ENCODE measurements at regions of chr22 and their contacts with region 1.

Region 1: GRCh38 chr22:38317122-38317994 is at the start of gene CSNK1E:
- DNase-seq: peak; percentile 85 to 90
- ATAC-seq: peak; percentile 68 to 79 (median 74)
- H3K4me3 ChIP-seq: peak within 1 kb of the TSS; percentile 76
- H3K27ac ChIP-seq: peak within 1 kb of the TSS; percentile 96
- H3K4me1 ChIP-seq: peaks cover 31% of the 10 kb centered on the region
- H3K27me3 ChIP-seq: no peaks in the 10 kb centered on the region
- CTCF ChIP-seq: no peak
- total RNA-seq, gene CSNK1E: 41.4 to 61.8 (median 49.0) TPM

Region 2: GRCh38 chr22:36365020-36365411 is 1952.3 kb before region 1 on chr22:
- intact Hi-C with region 1: no loop called
- DNase-seq: peak; percentile 62 to 67
- ATAC-seq: peak; percentile 48 to 69 (median 61)
- H3K4me3 ChIP-seq: no peak overlapping the region
- H3K27ac ChIP-seq: peak overlapping the region; percentile 69
- H3K4me1 ChIP-seq: peaks cover 92% of the 10 kb centered on the region
- H3K27me3 ChIP-seq: no peaks in the 10 kb centered on the region
- CTCF ChIP-seq: no peak

Region 3: GRCh38 chr22:38272373-38273134 is 44.8 kb before region 1 on chr22 and contains the start of gene TMEM184B:
- intact Hi-C with region 1: loop called in 1 of 2 experiments (anchors 5 kb)
- DNase-seq: peak; percentile 86 to 90
- ATAC-seq: peak; percentile 91 to 95 (median 93)
- H3K4me3 ChIP-seq: peak within 1 kb of the TSS; percentile 90
- H3K27ac ChIP-seq: peak within 1 kb of the TSS; percentile 87
- H3K4me1 ChIP-seq: peaks cover 42% of the 10 kb centered on the region
- H3K27me3 ChIP-seq: no peaks in the 10 kb centered on the region
- CTCF ChIP-seq: no peak
- total RNA-seq, gene TMEM184B: 23.2 to 40.3 (median 30.3) TPM

Region 4: GRCh38 chr22:38284042-38284402 is 33.3 kb before region 1 on chr22:
- intact Hi-C with region 1: no loop called
- DNase-seq: no peak
- ATAC-seq: peak; percentile 63 to 76 (median 70)
- H3K4me3 ChIP-seq: no peak overlapping the region
- H3K27ac ChIP-seq: peak overlapping the region; percentile 58
- H3K4me1 ChIP-seq: no peaks in the 10 kb centered on the region
- H3K27me3 ChIP-seq: no peaks in the 10 kb centered on the region
- CTCF ChIP-seq: no peak

Region 5: DNA sequence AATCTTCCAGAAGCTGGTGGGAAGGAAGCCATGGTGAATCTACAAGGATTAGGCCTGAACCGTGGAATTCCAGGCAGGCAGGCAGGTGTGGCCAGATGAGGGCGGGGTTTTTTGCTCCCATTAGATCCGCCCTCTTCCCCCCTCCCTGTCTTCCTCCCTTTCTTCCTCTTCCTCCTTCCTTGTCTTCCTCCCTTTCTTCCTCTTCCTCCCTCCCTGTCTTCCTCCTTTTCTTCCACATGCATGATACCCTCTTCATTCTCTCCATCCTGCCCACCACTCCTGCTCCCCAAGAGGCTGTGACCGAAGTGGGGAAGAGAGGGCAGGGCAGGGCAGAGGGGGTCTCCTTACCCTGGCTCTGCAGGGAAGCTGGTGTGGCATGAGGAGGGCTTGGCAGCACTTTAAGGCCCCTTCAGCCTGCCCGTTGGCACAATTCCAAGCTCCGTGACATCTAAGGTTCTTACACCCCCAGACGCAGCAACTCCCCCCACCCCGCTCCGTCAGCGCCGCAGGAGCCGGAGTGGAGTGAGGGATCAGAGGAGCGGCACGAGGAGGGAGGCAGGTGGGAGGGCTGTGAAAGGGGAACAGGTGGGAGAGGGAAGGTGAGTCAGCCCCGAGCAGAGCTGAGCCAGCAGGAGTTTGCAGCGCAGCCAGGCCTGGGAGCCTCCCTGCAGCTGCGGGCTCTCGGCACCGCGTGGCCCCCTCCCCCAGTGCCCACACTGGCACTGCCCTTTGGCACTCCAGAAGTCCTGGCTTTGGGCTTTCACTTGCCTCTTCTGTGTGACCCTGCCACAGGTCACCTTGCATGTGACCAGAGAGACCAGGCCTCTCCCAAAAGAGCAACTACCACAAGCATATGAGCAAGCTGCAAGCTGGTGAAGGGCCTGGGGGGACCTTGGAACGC is 105.5 kb after region 1 on chr22:
- intact Hi-C with region 1: no loop called
- DNase-seq: no peak
- ATAC-seq: no peak
- H3K4me3 ChIP-seq: no peak overlapping the region
- H3K27ac ChIP-seq: no peak overlapping the region
- H3K4me1 ChIP-seq: no peaks in the 10 kb centered on the region
- H3K27me3 ChIP-seq: no peaks in the 10 kb centered on the region
- CTCF ChIP-seq: no peak

Region 6: DNA sequence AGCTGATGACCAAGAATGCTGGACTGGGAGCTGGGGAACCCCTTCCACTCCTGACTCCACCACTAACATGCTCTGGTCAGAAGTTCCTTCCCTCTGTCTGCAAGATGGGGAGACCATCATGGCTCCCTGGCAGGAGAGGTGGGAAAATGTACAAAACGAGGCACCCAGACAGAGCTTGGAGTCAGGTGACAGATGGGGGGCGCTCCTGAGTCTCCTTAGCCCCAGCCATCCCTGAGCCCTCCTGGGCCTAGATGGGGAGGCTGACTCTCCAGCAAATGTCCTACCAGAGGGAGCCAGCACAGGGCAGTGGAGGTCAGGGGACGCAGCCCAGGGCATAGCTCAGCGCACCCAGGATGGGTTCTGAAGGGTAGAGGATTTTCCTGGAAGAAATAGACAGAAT is 117.7 kb after region 1 on chr22:
- intact Hi-C with region 1: no loop called
- DNase-seq: no peak
- ATAC-seq: no peak
- H3K4me3 ChIP-seq: no peak overlapping the region
- H3K27ac ChIP-seq: no peak overlapping the region
- H3K4me1 ChIP-seq: no peaks in the 10 kb centered on the region
- H3K27me3 ChIP-seq: peaks cover 0 to 11% (median 0%) of the 10 kb centered on the region in 3 donors
- CTCF ChIP-seq: no peak